ENCODE measurements at regions of chr19 and their contacts with region 1.

Region 1: GRCh38 chr19:51531349-51532315 is at the start of gene SIGLEC6:
- DNase-seq: peak; percentile 88
- ATAC-seq: peak; percentile 96
- H3K4me3 ChIP-seq: peak within 1 kb of the TSS in 4 of 5 experiments; percentile 51 to 60 (median 56)
- H3K4me3 Mint-ChIP-seq: peak within 1 kb of the TSS; percentile 88
- H3K27ac ChIP-seq: peak within 1 kb of the TSS; percentile 32 to 33
- H3K27ac Mint-ChIP-seq: peak within 1 kb of the TSS; percentile 83
- H3K4me1 ChIP-seq: peaks cover 25 to 41% of the 10 kb centered on the region in 2 donors
- H3K4me1 Mint-ChIP-seq: peaks cover 78% of the 10 kb centered on the region
- H3K27me3 ChIP-seq: no peaks in the 10 kb centered on the region
- H3K27me3 Mint-ChIP-seq: no peaks in the 10 kb centered on the region
- CTCF ChIP-seq: no peak
- total RNA-seq, gene SIGLEC6: 21.2 and 28.9 TPM in 2 replicates

Region 2: DNA sequence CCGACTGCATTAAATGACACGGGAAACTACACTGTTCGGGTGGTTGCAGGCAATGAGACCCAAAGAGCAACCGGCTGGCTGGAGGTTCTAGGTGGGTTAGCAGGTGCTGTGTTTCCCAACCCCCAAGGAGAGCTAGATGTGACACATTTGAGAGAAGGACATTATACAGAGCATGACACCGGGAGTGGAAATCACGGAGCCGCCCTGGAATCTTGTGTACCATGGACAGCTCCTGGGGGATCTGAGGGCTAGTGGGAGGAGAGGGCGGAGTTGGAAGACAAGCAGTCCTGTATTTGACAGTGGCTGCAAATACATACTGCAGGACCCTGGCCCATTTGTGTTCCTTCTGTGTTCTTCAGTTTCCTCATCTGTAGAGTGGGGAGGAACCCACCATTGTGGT is 51.0 kb before region 1 on chr19:
- CTCF ChIA-PET with region 1: no interaction called
- POLR2A ChIA-PET with region 1: no interaction called
- intact Hi-C with region 1: no loop called
- DNase-seq: no peak
- ATAC-seq: no peak
- H3K4me3 ChIP-seq: no peak overlapping the region
- H3K4me3 Mint-ChIP-seq: no peak overlapping the region
- H3K27ac ChIP-seq: no peak overlapping the region
- H3K27ac Mint-ChIP-seq: no peak overlapping the region
- H3K4me1 ChIP-seq: no peaks in the 10 kb centered on the region
- H3K4me1 Mint-ChIP-seq: no peaks in the 10 kb centered on the region
- H3K27me3 ChIP-seq: peaks cover 0 to 20% (median 8%) of the 10 kb centered on the region in 4 experiments
- H3K27me3 Mint-ChIP-seq: peaks cover 40% of the 10 kb centered on the region
- CTCF ChIP-seq: no peak

Region 3: GRCh38 chr19:51546650-51547396 is 15.2 kb after region 1 on chr19:
- CTCF ChIA-PET with region 1: interaction called, 9 read pairs
- POLR2A ChIA-PET with region 1: interaction called, 7 read pairs
- intact Hi-C with region 1: loop called (anchors 1 kb)
- DNase-seq: no peak
- ATAC-seq: no peak
- H3K4me3 ChIP-seq: peak overlapping the region in 3 of 5 experiments; percentile 7 to 47 (median 11)
- H3K4me3 Mint-ChIP-seq: peak overlapping the region; percentile 83
- H3K27ac ChIP-seq: peak overlapping the region; percentile 43 to 77
- H3K27ac Mint-ChIP-seq: peak overlapping the region; percentile 97
- H3K4me1 ChIP-seq: peaks cover 49 to 77% of the 10 kb centered on the region in 2 donors
- H3K4me1 Mint-ChIP-seq: peaks cover 85% of the 10 kb centered on the region
- H3K27me3 ChIP-seq: no peaks in the 10 kb centered on the region
- H3K27me3 Mint-ChIP-seq: no peaks in the 10 kb centered on the region
- CTCF ChIP-seq: no peak

Region 4: DNA sequence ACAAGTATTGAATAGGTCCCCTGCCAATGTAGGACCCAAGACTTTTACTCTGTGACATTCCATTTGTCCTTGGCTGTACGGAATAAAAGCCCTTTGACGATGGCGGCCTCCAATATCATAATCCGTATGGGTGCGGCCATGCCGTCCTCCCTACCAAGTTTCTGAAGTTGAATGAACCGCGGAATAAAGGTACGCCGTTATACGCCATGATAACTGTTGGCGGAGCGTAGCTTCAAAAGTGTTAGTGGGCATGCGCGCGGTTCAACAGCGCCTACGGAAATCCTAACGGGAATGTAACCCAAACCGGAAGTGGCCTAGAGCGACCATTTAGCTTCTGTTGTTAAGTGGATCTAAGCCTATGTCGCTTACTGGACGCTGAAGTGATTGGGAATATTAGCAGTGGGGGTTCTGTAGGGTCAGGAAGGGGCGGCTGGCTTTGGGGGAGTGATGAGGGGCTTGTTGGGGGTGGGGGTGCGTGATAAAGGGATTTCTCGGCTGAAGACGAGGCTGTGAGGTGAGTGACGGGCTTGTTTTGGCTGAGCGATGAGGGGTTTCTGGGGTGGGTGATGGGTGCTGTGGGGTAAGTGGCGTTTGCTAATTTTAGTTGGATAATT is 39.4 kb after region 1 on chr19 and contains the start of gene ZNF175:
- CTCF ChIA-PET with region 1: interaction called, 3 read pairs
- POLR2A ChIA-PET with region 1: no interaction called
- intact Hi-C with region 1: loop called (anchors 5 kb)
- DNase-seq: peak; percentile 91
- ATAC-seq: peak; percentile 96
- H3K4me3 ChIP-seq: peak within 1 kb of the TSS; percentile 59 to 84 (median 81)
- H3K4me3 Mint-ChIP-seq: peak within 1 kb of the TSS; percentile 88
- H3K27ac ChIP-seq: peak within 1 kb of the TSS in 1 of 2 donors; percentile 59
- H3K27ac Mint-ChIP-seq: peak within 1 kb of the TSS; percentile 83
- H3K4me1 ChIP-seq: peaks cover 19% of the 10 kb centered on the region in 2 donors
- H3K4me1 Mint-ChIP-seq: peaks cover 38% of the 10 kb centered on the region
- H3K27me3 ChIP-seq: no peaks in the 10 kb centered on the region
- H3K27me3 Mint-ChIP-seq: no peaks in the 10 kb centered on the region
- CTCF ChIP-seq: no peak
- total RNA-seq, gene ZNF175: 31.3 and 33.0 TPM in 2 replicates

Region 5: DNA sequence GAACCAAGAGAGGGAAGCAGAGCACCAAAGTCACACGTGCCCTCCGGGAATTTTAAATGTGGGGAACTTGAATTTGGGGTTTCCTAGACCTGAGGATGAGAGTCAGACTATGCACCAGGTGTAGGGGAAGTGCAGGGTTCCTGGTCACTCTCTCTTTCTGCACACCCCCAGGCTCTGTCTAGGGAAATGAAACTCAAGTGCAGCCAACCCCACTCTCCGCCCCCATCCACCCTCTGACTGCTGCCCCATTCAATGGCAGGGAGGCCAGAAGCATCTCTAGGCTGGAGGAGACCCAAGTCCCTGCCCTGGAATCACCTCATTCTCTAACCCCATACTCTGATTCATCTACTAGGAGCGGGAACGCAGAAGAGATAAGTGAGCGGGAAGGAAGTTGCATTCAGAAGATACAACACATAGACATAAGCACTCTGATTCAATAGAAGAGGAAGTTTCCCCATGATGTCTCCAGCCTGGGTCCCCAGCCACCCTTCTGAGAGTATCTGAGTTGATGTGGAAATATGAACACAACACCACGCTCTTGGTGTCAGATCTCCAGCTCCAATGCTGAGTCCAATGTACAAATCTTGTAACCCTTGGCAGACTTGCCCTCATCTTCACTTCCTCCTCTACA is 119.7 kb after region 1 on chr19:
- CTCF ChIA-PET with region 1: interaction called, 27 read pairs
- POLR2A ChIA-PET with region 1: no interaction called
- intact Hi-C with region 1: loop called (anchors 5 kb)
- DNase-seq: peak; percentile 85
- ATAC-seq: peak; percentile 94
- H3K4me3 ChIP-seq: peak overlapping the region in 1 of 5 experiments; percentile 12
- H3K4me3 Mint-ChIP-seq: peak overlapping the region; percentile 73
- H3K27ac ChIP-seq: peak overlapping the region; percentile 70 to 87
- H3K27ac Mint-ChIP-seq: peak overlapping the region; percentile 87
- H3K4me1 ChIP-seq: peaks cover 43 to 50% of the 10 kb centered on the region in 2 donors
- H3K4me1 Mint-ChIP-seq: peaks cover 68% of the 10 kb centered on the region
- H3K27me3 ChIP-seq: no peaks in the 10 kb centered on the region
- H3K27me3 Mint-ChIP-seq: no peaks in the 10 kb centered on the region
- CTCF ChIP-seq: no peak

Measured in B cell (primary cell).